CD8-positive, alpha-beta memory T cell (primary cell): ENCODE measurements at regions of chr11 and their contacts with region 1.

Region 1: GRCh38 chr11:58567889-58568512 is 7.7 kb downstream of the LPXN start:
- DNase-seq: peak; percentile 62 to 83 (median 71)
- H3K4me3 ChIP-seq: no peak overlapping the region
- H3K4me3 Mint-ChIP-seq: peak overlapping the region; percentile 10 to 78 (median 43)
- H3K27ac ChIP-seq: no peak overlapping the region
- H3K27ac Mint-ChIP-seq: peak overlapping the region; percentile 28 to 95 (median 80)
- H3K4me1 ChIP-seq: peaks cover 51% of the 10 kb centered on the region
- H3K4me1 Mint-ChIP-seq: peaks cover 59 to 80% (median 79%) of the 10 kb centered on the region in 3 donors
- H3K27me3 ChIP-seq: no peaks in the 10 kb centered on the region
- H3K27me3 Mint-ChIP-seq: no peaks in the 10 kb centered on the region

Region 2: DNA sequence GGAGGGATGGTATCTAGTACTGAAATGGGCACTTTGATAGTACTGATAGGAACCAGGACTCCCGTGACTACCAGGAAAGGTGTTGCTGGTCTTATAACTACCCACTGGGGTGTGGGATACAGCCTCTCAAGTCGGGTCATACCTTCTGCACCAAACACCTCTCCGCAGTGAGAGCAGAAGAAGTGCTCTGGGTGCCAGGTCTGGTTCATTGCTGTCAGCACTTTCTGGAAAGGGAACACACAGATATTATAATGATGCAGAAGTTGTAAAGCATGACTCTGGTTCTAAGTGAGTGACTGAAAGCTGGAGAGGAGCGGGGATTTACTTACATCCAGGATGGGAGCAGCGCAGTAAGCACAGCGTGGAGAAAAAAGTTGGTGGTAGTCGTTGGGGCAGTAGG is 18.4 kb before region 1 on chr11:
- CTCF ChIA-PET with region 1: interaction called, 27 read pairs
- POLR2A ChIA-PET with region 1: interaction called, 7 read pairs
- DNase-seq: no peak
- H3K4me3 ChIP-seq: no peak overlapping the region
- H3K4me3 Mint-ChIP-seq: no peak overlapping the region
- H3K27ac ChIP-seq: no peak overlapping the region
- H3K27ac Mint-ChIP-seq: peak overlapping the region in 4 of 8 donors; percentile 7 to 70 (median 64)
- H3K4me1 ChIP-seq: no peaks in the 10 kb centered on the region
- H3K4me1 Mint-ChIP-seq: peaks cover 7 to 43% (median 29%) of the 10 kb centered on the region in 3 donors
- H3K27me3 ChIP-seq: no peaks in the 10 kb centered on the region
- H3K27me3 Mint-ChIP-seq: no peaks in the 10 kb centered on the region

Region 3: DNA sequence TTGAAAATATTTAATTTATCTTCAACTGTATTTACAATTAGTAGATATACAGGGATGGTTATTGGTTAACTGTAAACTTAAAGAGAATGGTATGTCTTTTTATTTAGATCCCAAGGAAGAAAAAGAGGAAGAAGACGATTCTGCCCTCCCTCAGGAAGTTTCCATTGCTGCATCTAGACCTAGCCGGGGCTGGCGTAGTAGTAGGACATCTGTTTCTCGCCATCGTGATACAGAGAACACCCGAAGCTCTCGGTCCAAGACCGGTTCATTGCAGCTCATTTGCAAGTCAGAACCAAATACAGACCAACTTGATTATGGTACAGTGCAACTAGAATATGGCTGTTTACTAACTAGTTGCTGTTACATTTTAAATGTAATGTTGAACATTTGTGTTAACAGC is 41.7 kb after region 1 on chr11:
- CTCF ChIA-PET with region 1: interaction called, 27 read pairs
- POLR2A ChIA-PET with region 1: no interaction called
- DNase-seq: no peak
- H3K4me3 ChIP-seq: no peak overlapping the region
- H3K4me3 Mint-ChIP-seq: no peak overlapping the region
- H3K27ac ChIP-seq: no peak overlapping the region
- H3K27ac Mint-ChIP-seq: peak overlapping the region in 2 of 8 donors; percentile 3 to 22
- H3K4me1 ChIP-seq: peaks cover 19% of the 10 kb centered on the region
- H3K4me1 Mint-ChIP-seq: peaks cover 31 to 49% (median 40%) of the 10 kb centered on the region in 3 donors
- H3K27me3 ChIP-seq: no peaks in the 10 kb centered on the region
- H3K27me3 Mint-ChIP-seq: no peaks in the 10 kb centered on the region

Region 4: DNA sequence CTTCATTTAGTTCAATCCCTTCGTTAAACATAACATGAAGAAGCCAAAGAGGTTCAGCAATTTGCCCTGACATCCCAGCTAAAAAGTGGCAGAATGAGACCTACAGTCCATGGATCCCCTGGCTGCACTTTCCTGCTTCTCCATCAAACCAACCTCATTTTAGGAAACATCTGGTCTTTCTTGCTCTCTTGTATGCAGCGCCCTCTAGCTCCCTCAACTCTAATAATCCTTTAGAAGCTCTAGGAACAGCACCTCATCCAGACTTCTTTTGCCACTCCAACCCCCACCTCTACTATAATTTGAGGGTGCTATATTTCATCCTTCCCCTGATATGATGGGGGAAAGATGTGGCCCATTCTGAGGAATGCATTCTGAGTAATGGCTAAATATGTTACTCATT is 61.9 kb after region 1 on chr11:
- CTCF ChIA-PET with region 1: interaction called, 27 read pairs
- POLR2A ChIA-PET with region 1: interaction called, 3 read pairs
- DNase-seq: peak in 1 of 5 donors; percentile 16
- H3K4me3 ChIP-seq: no peak overlapping the region
- H3K4me3 Mint-ChIP-seq: no peak overlapping the region
- H3K27ac ChIP-seq: no peak overlapping the region
- H3K27ac Mint-ChIP-seq: peak overlapping the region in 4 of 8 donors; percentile 8 to 42 (median 25)
- H3K4me1 ChIP-seq: no peaks in the 10 kb centered on the region
- H3K4me1 Mint-ChIP-seq: no peaks in the 10 kb centered on the region
- H3K27me3 ChIP-seq: no peaks in the 10 kb centered on the region
- H3K27me3 Mint-ChIP-seq: peaks cover 0 to 1% of the 10 kb centered on the region in 2 donors

Region 5: GRCh38 chr11:58652726-58653280 is 84.8 kb after region 1 on chr11:
- CTCF ChIA-PET with region 1: no interaction called
- POLR2A ChIA-PET with region 1: no interaction called
- DNase-seq: no peak
- H3K4me3 ChIP-seq: no peak overlapping the region
- H3K4me3 Mint-ChIP-seq: no peak overlapping the region
- H3K27ac ChIP-seq: no peak overlapping the region
- H3K27ac Mint-ChIP-seq: no peak overlapping the region
- H3K4me1 ChIP-seq: no peaks in the 10 kb centered on the region
- H3K4me1 Mint-ChIP-seq: peaks cover 2 to 7% (median 5%) of the 10 kb centered on the region in 3 donors
- H3K27me3 ChIP-seq: no peaks in the 10 kb centered on the region
- H3K27me3 Mint-ChIP-seq: peaks cover 3% of the 10 kb centered on the region in 2 donors